ENCODE measurements at regions of chr19 and their contacts with region 1.

Region 1: GRCh38 chr19:45681391-45682015 is 10.2 kb downstream of the SNRPD2 start:
- DNase-seq: peak; percentile 89 to 91
- ATAC-seq: peak; percentile 92 to 99 (median 95)
- H3K4me3 ChIP-seq: peak overlapping the region; percentile 23
- H3K4me3 Mint-ChIP-seq: peak overlapping the region; percentile 81
- H3K27ac ChIP-seq: no peak overlapping the region
- H3K27ac Mint-ChIP-seq: peak overlapping the region; percentile 7 to 86
- H3K4me1 ChIP-seq: peaks cover 30% of the 10 kb centered on the region
- H3K4me1 Mint-ChIP-seq: peaks cover 17 to 24% of the 10 kb centered on the region in 2 donors
- H3K27me3 ChIP-seq: peaks cover 11% of the 10 kb centered on the region
- H3K27me3 Mint-ChIP-seq: peaks cover 0 to 12% of the 10 kb centered on the region in 2 donors
- CTCF ChIP-seq: peak; percentile 94

Region 2: GRCh38 chr19:45523642-45524256 is 157.8 kb before region 1 on chr19:
- intact Hi-C with region 1: loop called (anchors 1 kb)
- DNase-seq: peak; percentile 70 to 90
- ATAC-seq: peak; percentile 99 to 100 (median 99)
- H3K4me3 ChIP-seq: no peak overlapping the region
- H3K4me3 Mint-ChIP-seq: no peak overlapping the region
- H3K27ac ChIP-seq: peak overlapping the region; percentile 13
- H3K27ac Mint-ChIP-seq: peak overlapping the region; percentile 75 to 78
- H3K4me1 ChIP-seq: peaks cover 19% of the 10 kb centered on the region
- H3K4me1 Mint-ChIP-seq: peaks cover 20 to 22% of the 10 kb centered on the region in 2 donors
- H3K27me3 ChIP-seq: no peaks in the 10 kb centered on the region
- H3K27me3 Mint-ChIP-seq: no peaks in the 10 kb centered on the region
- CTCF ChIP-seq: peak; percentile 75

Region 3: DNA sequence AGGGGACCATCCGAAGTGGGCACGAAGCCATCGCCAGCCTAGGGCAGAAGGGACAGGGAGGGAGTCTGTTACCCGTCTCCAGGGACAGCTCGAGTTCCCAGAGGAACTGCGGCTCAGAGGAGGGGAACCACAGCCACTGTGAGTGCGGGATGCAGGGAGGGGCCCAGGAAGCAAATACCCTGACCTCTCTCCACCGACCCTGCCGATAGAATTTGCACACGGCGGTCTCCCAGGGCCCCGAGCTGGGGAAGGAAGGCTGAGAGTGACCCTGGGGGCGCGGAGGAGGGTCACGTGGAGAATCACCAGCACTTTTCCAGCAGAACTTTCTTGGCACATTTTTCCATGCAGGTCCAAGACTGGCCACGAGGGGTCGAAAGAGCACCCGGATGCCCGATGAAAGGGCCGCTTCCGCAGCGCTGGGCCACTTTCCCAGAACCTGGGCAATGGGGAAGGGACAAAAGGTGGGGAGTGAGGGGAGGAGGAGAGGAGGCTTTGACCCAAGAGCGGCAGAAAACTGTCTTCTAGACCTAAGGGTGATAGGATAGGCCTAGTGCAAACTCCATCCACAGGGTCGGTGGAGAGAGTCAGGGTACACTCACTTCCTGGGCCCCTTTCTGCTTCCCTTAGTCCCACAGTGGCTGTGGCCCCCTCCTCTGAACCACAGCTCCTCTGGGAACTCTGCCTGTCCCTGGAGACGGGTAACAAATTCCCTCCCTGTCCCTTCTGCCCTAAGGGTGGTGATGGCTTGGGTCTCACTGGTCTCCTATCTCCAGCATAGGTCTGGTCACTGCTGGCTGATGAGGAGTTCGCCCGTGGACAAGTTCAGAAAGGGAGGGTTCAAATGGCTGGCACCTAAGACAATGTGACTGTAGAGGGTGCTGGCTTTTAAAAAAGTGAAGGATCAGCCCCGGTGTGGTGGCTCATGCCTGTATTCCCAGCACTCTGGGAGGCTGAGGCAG is 74.2 kb before region 1 on chr19:
- intact Hi-C with region 1: loop called (anchors 5 kb)
- DNase-seq: peak; percentile 43 to 71
- ATAC-seq: peak in 2 of 3 donors; percentile 73 to 81
- H3K4me3 ChIP-seq: no peak overlapping the region
- H3K4me3 Mint-ChIP-seq: no peak overlapping the region
- H3K27ac ChIP-seq: no peak overlapping the region
- H3K27ac Mint-ChIP-seq: peak overlapping the region in 1 of 2 donors; percentile 86
- H3K4me1 ChIP-seq: peaks cover 11% of the 10 kb centered on the region
- H3K4me1 Mint-ChIP-seq: peaks cover 5 to 12% of the 10 kb centered on the region in 2 donors
- H3K27me3 ChIP-seq: peaks cover 4% of the 10 kb centered on the region
- H3K27me3 Mint-ChIP-seq: peaks cover 11 to 13% of the 10 kb centered on the region in 2 donors
- CTCF ChIP-seq: peak; percentile 84

Region 4: GRCh38 chr19:45667620-45668341 is 13.7 kb before region 1 on chr19 and contains the start of gene GIPR:
- intact Hi-C with region 1: loop called (anchors 2 kb)
- DNase-seq: peak; percentile 57 to 71
- ATAC-seq: peak; percentile 73 to 85 (median 78)
- H3K4me3 ChIP-seq: peak within 1 kb of the TSS; percentile 56
- H3K4me3 Mint-ChIP-seq: peak within 1 kb of the TSS; percentile 88
- H3K27ac ChIP-seq: peak within 1 kb of the TSS; percentile 12
- H3K27ac Mint-ChIP-seq: peak within 1 kb of the TSS; percentile 76 to 85
- H3K4me1 ChIP-seq: peaks cover 42% of the 10 kb centered on the region
- H3K4me1 Mint-ChIP-seq: peaks cover 31 to 45% of the 10 kb centered on the region in 2 donors
- H3K27me3 ChIP-seq: peaks cover 7% of the 10 kb centered on the region
- H3K27me3 Mint-ChIP-seq: peaks cover 0 to 12% of the 10 kb centered on the region in 2 donors
- CTCF ChIP-seq: no peak
- total RNA-seq, gene GIPR: 20.7 to 24.5 (median 21.5) TPM

Measured in natural killer cell (primary cell).